ENCODE measurements at regions of chr17 and their contacts with region 1.

Region 1: DNA sequence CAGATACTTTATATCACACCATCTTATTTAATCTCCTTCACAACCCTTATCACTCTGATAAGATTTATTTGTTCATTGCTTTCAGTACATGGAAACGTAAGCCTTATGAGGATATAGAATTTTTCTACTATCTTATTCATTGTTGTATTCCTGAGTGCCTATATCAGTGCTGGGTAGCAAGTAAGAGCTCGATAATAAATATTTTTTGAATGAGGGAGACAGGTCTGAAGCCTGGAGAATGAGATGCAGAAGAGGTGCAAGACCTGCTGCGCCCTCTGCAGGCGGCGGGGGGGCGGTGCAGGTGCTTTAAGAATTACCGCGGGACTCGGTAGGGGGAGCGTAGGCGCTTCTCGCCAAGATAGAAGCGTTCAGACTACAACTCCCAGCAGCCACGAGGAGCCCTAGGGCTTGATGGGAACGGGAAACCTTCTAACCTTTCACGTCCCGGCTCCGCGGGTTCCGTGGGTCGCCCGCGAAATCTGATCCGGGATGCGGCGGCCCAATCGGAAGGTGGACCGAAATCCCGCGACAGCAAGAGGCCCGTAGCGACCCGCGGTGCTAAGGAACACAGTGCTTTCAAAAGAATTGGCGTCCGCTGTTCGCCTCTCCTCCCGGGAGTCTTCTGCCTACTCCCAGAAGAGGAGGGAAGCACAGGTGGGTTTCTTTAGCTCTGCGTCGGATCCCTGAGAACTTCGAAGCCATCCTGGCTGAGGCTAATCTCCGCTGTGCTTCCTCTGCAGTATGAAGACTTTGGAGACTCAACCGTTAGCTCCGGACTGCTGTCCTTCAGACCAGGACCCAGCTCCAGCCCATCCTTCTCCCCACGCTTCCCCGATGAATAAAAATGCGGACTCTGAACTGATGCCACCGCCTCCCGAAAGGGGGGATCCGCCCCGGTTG is at the start of gene WRAP53:
- DNase-seq: peak; percentile 85
- ATAC-seq: peak; percentile 90
- H3K4me3 ChIP-seq: peak within 1 kb of the TSS; percentile 92
- H3K27ac ChIP-seq: peak within 1 kb of the TSS; percentile 100
- H3K4me1 ChIP-seq: peaks cover 12% of the 10 kb centered on the region
- H3K27me3 ChIP-seq: no peaks in the 10 kb centered on the region
- CTCF ChIP-seq: peak; percentile 97 to 99 (median 99)
- EP300 ChIP-seq: peak in 1 of 2 experiments; percentile 22; a peak in 1 of 4 replicates
- POLR2A ChIP-seq: peak; percentile 61
- RAD21 ChIP-seq: peak; percentile 78
- polyA plus RNA-seq, gene WRAP53: 1.9 to 5.3 TPM

Region 2: DNA sequence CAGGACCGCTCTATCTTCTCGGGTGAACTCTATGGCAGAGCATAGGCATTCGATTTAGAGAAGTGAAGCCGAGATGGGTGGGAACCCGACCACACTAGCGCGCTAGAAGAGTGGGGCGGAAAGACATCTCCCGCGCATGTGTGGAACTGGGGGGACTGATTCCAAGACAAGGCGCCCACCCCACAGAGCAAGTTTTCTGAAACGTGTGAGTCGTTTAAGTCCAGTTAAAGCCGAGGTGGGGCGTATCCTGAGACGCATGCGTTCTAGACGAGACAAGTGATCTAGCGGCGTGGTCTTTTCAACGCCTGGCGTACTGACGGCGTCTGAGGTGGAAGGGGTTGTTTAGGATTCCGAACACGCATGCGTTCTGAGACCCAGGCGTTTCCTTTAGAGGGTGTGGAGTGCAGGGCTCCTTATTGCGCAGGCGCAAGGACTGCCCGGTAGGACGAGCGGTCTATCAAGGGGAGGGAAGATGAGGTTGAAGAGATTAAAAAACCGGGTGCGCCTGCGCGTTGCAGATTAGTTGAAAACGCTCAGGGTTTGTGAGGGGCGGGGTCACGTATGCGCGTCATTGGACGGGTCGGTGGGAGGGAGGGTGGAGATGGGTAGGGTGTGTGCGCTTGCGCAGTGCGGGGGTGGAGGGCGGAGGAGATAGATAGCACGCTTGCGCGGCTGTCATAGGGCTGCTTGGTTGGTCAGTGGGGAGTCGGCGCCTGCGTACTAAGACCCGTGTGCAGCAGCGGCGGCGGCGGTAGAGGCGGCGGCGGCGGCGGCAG is 381.1 kb before region 1 on chr17 and contains the start of gene EIF5A:
- CTCF ChIA-PET with region 1: no interaction called
- POLR2A ChIA-PET with region 1: interaction called, 4 read pairs
- RAD21 ChIA-PET with region 1: no interaction called
- SMC1A ChIA-PET with region 1: no interaction called
- in situ Hi-C with region 1: no loop called
- intact Hi-C with region 1: loop called (anchors 10 kb)
- DNase-seq: peak; percentile 100
- ATAC-seq: peak; percentile 82
- H3K4me3 ChIP-seq: peak within 1 kb of the TSS; percentile 99
- H3K27ac ChIP-seq: peak within 1 kb of the TSS; percentile 99
- H3K4me1 ChIP-seq: peaks cover 12% of the 10 kb centered on the region
- H3K27me3 ChIP-seq: no peaks in the 10 kb centered on the region
- CTCF ChIP-seq: no peak
- EP300 ChIP-seq: 0 out of 4 replicates have a peak, but pooled peaks of 1 of the 2 experiments have one; percentile 54
- POLR2A ChIP-seq: peak; percentile 84
- RAD21 ChIP-seq: no peak
- polyA plus RNA-seq, gene EIF5A: 26.5 to 85.5 TPM

Region 3: GRCh38 chr17:7435221-7435675 is 252.9 kb before region 1 on chr17 and contains the start of gene TMEM102:
- CTCF ChIA-PET with region 1: interaction called, 6 read pairs
- POLR2A ChIA-PET with region 1: interaction called, 15 read pairs
- RAD21 ChIA-PET with region 1: interaction called, 5 read pairs
- SMC1A ChIA-PET with region 1: interaction called, 7 read pairs
- in situ Hi-C with region 1: no loop called
- intact Hi-C with region 1: no loop called
- DNase-seq: peak; percentile 97
- ATAC-seq: peak; percentile 87
- H3K4me3 ChIP-seq: peak within 1 kb of the TSS; percentile 78
- H3K27ac ChIP-seq: peak within 1 kb of the TSS; percentile 60
- H3K4me1 ChIP-seq: peaks cover 19% of the 10 kb centered on the region
- H3K27me3 ChIP-seq: peaks cover 0 to 4% of the 10 kb centered on the region in 2 experiments; a peak in 1 of 4 replicates
- CTCF ChIP-seq: no peak
- EP300 ChIP-seq: no peak
- POLR2A ChIP-seq: 0 out of 2 replicates have a peak, but pooled peaks have one; percentile 28
- RAD21 ChIP-seq: no peak
- polyA plus RNA-seq, gene TMEM102: 0.04 TPM in 1 of 2 experiments, not detected in the other

Region 4: DNA sequence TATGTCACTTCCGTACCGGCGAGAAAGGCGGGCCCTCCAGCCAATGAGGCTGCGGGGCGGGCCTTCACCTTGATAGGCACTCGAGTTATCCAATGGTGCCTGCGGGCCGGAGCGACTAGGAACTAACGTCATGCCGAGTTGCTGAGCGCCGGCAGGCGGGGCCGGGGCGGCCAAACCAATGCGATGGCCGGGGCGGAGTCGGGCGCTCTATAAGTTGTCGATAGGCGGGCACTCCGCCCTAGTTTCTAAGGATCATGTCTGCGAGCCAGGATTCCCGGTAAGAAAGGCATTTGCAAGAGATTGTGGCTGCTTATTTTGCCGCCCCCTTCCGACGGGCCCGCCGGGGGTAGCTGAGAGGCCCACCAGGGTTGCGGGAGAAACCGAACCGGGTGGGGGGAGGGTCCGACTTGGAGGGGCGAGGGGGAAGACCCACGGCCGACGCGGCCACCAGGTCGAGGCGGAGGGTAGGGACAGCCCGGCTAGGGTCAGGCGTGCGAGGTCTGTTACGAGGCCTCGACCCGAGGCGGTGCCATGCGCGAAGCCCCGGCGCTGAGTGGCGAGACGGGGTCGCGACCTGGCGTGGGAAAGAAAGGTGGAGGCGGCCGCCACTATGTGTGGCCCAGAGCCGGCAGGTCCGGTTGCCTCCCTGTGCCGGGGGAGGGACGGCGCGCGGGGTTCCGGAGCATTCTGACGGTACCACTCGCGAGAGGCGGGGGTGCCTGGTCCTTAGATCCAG is 115.4 kb before region 1 on chr17:
- CTCF ChIA-PET with region 1: interaction called, 5 read pairs
- POLR2A ChIA-PET with region 1: interaction called, 7 read pairs
- RAD21 ChIA-PET with region 1: interaction called, 8 read pairs
- SMC1A ChIA-PET with region 1: interaction called, 6 read pairs
- in situ Hi-C with region 1: no loop called
- intact Hi-C with region 1: loop called (anchors 5 kb)
- DNase-seq: peak; percentile 98
- ATAC-seq: peak; percentile 0
- H3K4me3 ChIP-seq: peak overlapping the region; percentile 93
- H3K27ac ChIP-seq: peak overlapping the region; percentile 97
- H3K4me1 ChIP-seq: peaks cover 21% of the 10 kb centered on the region
- H3K27me3 ChIP-seq: no peaks in the 10 kb centered on the region
- CTCF ChIP-seq: no peak
- EP300 ChIP-seq: no peak
- POLR2A ChIP-seq: peak; percentile 85
- RAD21 ChIP-seq: no peak

Region 5: GRCh38 chr17:7614422-7615264 is 73.5 kb before region 1 on chr17 and contains the start of gene FXR2:
- CTCF ChIA-PET with region 1: interaction called, 18 read pairs
- POLR2A ChIA-PET with region 1: interaction called, 35 read pairs
- RAD21 ChIA-PET with region 1: interaction called, 21 read pairs
- SMC1A ChIA-PET with region 1: interaction called, 6 read pairs
- in situ Hi-C with region 1: no loop called
- intact Hi-C with region 1: loop called (anchors 5 kb)
- DNase-seq: peak; percentile 99
- ATAC-seq: peak; percentile 95
- H3K4me3 ChIP-seq: peak within 1 kb of the TSS; percentile 83
- H3K27ac ChIP-seq: peak within 1 kb of the TSS; percentile 81
- H3K4me1 ChIP-seq: peaks cover 4% of the 10 kb centered on the region; the same call in 1 of the 2 replicates
- H3K27me3 ChIP-seq: no peaks in the 10 kb centered on the region
- CTCF ChIP-seq: peak; percentile 63 to 97 (median 70); a peak in 5 of 6 replicates
- EP300 ChIP-seq: 0 out of 4 replicates have a peak, but pooled peaks of 1 of the 2 experiments have one; percentile 18
- POLR2A ChIP-seq: peak; percentile 77
- RAD21 ChIP-seq: no peak
- polyA plus RNA-seq, gene FXR2: 1.6 to 4.6 TPM

Region 6: DNA sequence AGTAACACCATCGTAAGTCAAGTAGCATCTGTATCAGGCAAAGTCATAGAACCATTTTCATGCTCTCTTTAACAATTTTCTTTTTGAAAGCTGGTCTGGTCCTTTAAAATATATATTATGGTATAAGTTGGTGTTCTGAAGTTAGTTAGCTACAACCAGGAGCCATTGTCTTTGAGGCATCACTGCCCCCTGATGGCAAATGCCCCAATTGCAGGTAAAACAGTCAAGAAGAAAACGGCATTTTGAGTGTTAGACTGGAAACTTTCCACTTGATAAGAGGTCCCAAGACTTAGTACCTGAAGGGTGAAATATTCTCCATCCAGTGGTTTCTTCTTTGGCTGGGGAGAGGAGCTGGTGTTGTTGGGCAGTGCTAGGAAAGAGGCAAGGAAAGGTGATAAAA is 14.9 kb before region 1 on chr17:
- CTCF ChIA-PET with region 1: interaction called, 13 read pairs
- POLR2A ChIA-PET with region 1: interaction called, 4 read pairs
- RAD21 ChIA-PET with region 1: no interaction called
- SMC1A ChIA-PET with region 1: interaction called, 3 read pairs
- in situ Hi-C with region 1: no loop called
- intact Hi-C with region 1: no loop called
- DNase-seq: peak; percentile 3
- ATAC-seq: no peak
- H3K4me3 ChIP-seq: no peak overlapping the region
- H3K27ac ChIP-seq: no peak overlapping the region
- H3K4me1 ChIP-seq: no peaks in the 10 kb centered on the region
- H3K27me3 ChIP-seq: no peaks in the 10 kb centered on the region
- CTCF ChIP-seq: peak; percentile 5 to 52 (median 38); a peak in 4 of 6 replicates
- EP300 ChIP-seq: no peak
- POLR2A ChIP-seq: no peak
- RAD21 ChIP-seq: 0 out of 2 replicates have a peak, but pooled peaks have one; percentile 22

Measured in GM12878 (cell line).